CD4-positive, alpha-beta memory T cell (primary cell): ENCODE measurements at regions of chr6 and their contacts with region 1.

Region 1: DNA sequence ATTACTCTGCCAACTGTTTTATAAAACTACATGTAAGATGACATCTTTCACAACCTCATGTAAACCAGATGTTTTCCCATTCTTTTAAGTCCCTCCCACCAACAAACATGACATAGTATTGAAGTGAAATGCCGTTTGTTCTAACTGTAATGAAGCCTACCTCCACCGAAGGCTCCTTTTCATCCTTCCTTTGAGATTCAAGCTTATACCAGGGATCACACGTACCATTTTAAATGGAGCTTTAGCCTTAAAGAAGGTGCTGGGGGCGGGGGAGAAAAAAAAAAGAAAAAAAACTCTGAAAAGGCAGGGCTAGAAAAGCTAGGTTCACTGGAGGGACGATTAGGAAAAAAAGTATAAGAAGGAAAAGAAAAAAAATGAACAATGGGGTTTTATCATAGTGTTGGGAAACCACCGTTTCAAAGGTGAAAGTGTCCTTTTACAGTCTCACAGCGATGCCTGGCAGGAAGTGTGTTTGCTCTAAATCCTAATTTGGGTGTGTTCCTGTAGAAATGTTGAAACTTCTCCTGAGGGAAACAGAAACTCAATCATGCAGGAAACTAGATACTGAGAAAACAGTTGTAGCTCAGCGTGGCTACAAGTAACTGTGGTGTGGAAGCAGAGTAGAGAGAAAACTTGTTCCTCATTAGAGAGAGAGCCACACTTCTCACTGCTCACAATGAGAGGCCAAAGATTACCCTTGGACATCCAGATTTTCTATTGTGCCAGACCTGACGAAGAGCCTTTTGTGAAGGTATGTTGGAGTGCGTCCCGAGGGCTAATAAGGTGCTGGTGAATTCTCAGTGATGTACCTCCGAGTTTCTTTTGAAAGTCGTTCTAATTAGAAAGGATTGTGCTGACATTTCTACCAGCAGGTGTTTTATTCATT is 37.6 kb upstream of the HINT3 start:
- DNase-seq: peak; percentile 63 to 80 (median 70)
- H3K4me3 ChIP-seq: peak overlapping the region in 1 of 2 donors; percentile 37
- H3K4me3 Mint-ChIP-seq: peak overlapping the region; percentile 51 to 87 (median 79)
- H3K27ac ChIP-seq: peak overlapping the region; percentile 73
- H3K27ac Mint-ChIP-seq: peak overlapping the region; percentile 83 to 97 (median 95)
- H3K4me1 ChIP-seq: peaks cover 23% of the 10 kb centered on the region
- H3K4me1 Mint-ChIP-seq: peaks cover 23 to 28% (median 27%) of the 10 kb centered on the region in 4 donors
- H3K27me3 ChIP-seq: no peaks in the 10 kb centered on the region
- H3K27me3 Mint-ChIP-seq: no peaks in the 10 kb centered on the region

Region 2: GRCh38 chr6:125906158-125906998 is 12.5 kb before region 1 on chr6:
- CTCF ChIA-PET with region 1: interaction called, 65 read pairs
- POLR2A ChIA-PET with region 1: no interaction called
- intact Hi-C with region 1: no loop called
- DNase-seq: peak; percentile 22 to 44 (median 39)
- H3K4me3 ChIP-seq: no peak overlapping the region
- H3K4me3 Mint-ChIP-seq: peak overlapping the region in 1 of 8 donors; percentile 21
- H3K27ac ChIP-seq: no peak overlapping the region
- H3K27ac Mint-ChIP-seq: peak overlapping the region; percentile 9 to 86 (median 68)
- H3K4me1 ChIP-seq: peaks cover 11% of the 10 kb centered on the region
- H3K4me1 Mint-ChIP-seq: peaks cover 16 to 33% (median 21%) of the 10 kb centered on the region in 4 donors
- H3K27me3 ChIP-seq: no peaks in the 10 kb centered on the region
- H3K27me3 Mint-ChIP-seq: no peaks in the 10 kb centered on the region